Caco-2 (cell line): ENCODE measurements at regions of chr6 and their contacts with region 1.

Region 1: GRCh38 chr6:112180095-112180820 is 74.1 kb downstream of the LAMA4 start:
- DNase-seq: peak in 1 of 2 experiments; percentile 59
- H3K4me3 ChIP-seq: no peak overlapping the region
- H3K4me3 Mint-ChIP-seq: no peak overlapping the region
- H3K27ac Mint-ChIP-seq: no peak overlapping the region
- H3K4me1 ChIP-seq: no peaks in the 10 kb centered on the region
- H3K4me1 Mint-ChIP-seq: no peaks in the 10 kb centered on the region
- H3K27me3 ChIP-seq: peaks cover 1% of the 10 kb centered on the region; the same call in 1 of the 2 replicates
- H3K27me3 Mint-ChIP-seq: peaks cover 8% of the 10 kb centered on the region
- CTCF ChIP-seq: peak; percentile 65 to 71

Region 2: GRCh38 chr6:110341663-110342596 is 1838.3 kb before region 1 on chr6:
- CTCF ChIA-PET with region 1: no interaction called
- POLR2A ChIA-PET with region 1: no interaction called
- intact Hi-C with region 1: no loop called
- DNase-seq: peak; percentile 58 to 64
- H3K4me3 ChIP-seq: no peak overlapping the region
- H3K4me3 Mint-ChIP-seq: no peak overlapping the region
- H3K27ac Mint-ChIP-seq: no peak overlapping the region
- H3K4me1 ChIP-seq: no peaks in the 10 kb centered on the region
- H3K4me1 Mint-ChIP-seq: no peaks in the 10 kb centered on the region
- H3K27me3 ChIP-seq: no peaks in the 10 kb centered on the region
- H3K27me3 Mint-ChIP-seq: no peaks in the 10 kb centered on the region
- CTCF ChIP-seq: peak; percentile 53 to 79

Region 3: GRCh38 chr6:112269114-112269513 is 88.9 kb after region 1 on chr6:
- CTCF ChIA-PET with region 1: no interaction called
- POLR2A ChIA-PET with region 1: no interaction called
- intact Hi-C with region 1: loop called (anchors 10 kb)
- DNase-seq: no peak
- H3K4me3 ChIP-seq: no peak overlapping the region
- H3K4me3 Mint-ChIP-seq: no peak overlapping the region
- H3K27ac Mint-ChIP-seq: no peak overlapping the region
- H3K4me1 ChIP-seq: no peaks in the 10 kb centered on the region
- H3K4me1 Mint-ChIP-seq: no peaks in the 10 kb centered on the region
- H3K27me3 ChIP-seq: no peaks in the 10 kb centered on the region; the same call in 1 of the 2 replicates
- H3K27me3 Mint-ChIP-seq: peaks cover 3% of the 10 kb centered on the region
- CTCF ChIP-seq: no peak

Region 4: GRCh38 chr6:112311950-112312547 is 131.8 kb after region 1 on chr6:
- CTCF ChIA-PET with region 1: interaction called, 16 read pairs
- POLR2A ChIA-PET with region 1: no interaction called
- intact Hi-C with region 1: loop called (anchors 1 kb)
- DNase-seq: peak in 1 of 2 experiments; percentile 16
- H3K4me3 ChIP-seq: no peak overlapping the region
- H3K4me3 Mint-ChIP-seq: no peak overlapping the region
- H3K27ac Mint-ChIP-seq: no peak overlapping the region
- H3K4me1 ChIP-seq: no peaks in the 10 kb centered on the region
- H3K4me1 Mint-ChIP-seq: no peaks in the 10 kb centered on the region
- H3K27me3 ChIP-seq: no peaks in the 10 kb centered on the region
- H3K27me3 Mint-ChIP-seq: peaks cover 8% of the 10 kb centered on the region
- CTCF ChIP-seq: peak; percentile 48 to 67

Region 5: GRCh38 chr6:112372226-112372806 is 192.1 kb after region 1 on chr6:
- CTCF ChIA-PET with region 1: interaction called, 3 read pairs
- POLR2A ChIA-PET with region 1: no interaction called
- intact Hi-C with region 1: loop called (anchors 1 kb)
- DNase-seq: no peak
- H3K4me3 ChIP-seq: no peak overlapping the region
- H3K4me3 Mint-ChIP-seq: no peak overlapping the region
- H3K27ac Mint-ChIP-seq: no peak overlapping the region
- H3K4me1 ChIP-seq: no peaks in the 10 kb centered on the region
- H3K4me1 Mint-ChIP-seq: no peaks in the 10 kb centered on the region
- H3K27me3 ChIP-seq: no peaks in the 10 kb centered on the region
- H3K27me3 Mint-ChIP-seq: peaks cover 20% of the 10 kb centered on the region
- CTCF ChIP-seq: peak in 1 of 2 experiments; percentile 32